ENCODE measurements at regions of chr9 and their contacts with region 1.

Region 1: DNA sequence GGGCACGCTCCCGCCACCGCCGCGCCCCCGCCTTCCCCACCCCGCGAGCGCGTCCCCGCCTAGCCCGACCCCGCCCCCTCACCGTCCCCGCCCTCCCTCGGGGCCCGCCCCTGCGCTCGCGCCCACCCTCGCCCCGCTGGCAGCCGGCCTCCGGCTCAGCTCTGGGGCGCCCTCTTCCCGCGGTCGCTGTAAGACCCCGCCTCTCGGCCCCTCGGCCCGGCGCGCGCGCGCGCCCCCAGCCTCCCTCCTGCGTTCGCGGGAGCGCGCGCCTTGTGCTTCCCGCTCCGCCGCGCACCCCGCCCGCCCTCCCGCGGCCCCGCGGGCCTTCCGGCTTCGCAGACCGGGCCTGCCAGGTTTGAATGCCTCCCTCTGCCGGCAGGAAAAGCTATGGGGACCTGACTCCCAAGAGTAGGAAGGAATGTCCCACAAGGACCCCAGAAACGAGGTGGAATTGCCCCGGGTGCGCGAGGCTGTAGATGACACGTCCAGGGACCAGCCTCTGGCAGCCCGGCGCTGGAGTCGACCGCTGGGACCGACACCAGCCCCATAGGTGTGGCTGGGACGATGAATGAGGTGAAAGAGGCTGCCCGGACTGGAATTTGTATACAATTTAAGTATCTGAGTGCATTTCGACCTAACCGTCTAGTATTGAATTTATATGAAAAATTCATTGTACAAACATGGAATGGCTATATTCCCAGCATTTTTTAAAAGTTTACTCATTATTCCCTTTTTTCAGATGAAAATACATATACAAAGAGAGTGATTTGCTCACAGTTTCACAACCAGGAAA is 416 bp upstream of the PTBP3 start:
- DNase-seq: peak; percentile 94 to 95
- H3K4me3 ChIP-seq: peak overlapping the region; percentile 94
- H3K4me3 Mint-ChIP-seq: peak overlapping the region; percentile 88
- H3K27ac Mint-ChIP-seq: peak overlapping the region; percentile 95
- H3K4me1 ChIP-seq: peaks cover 39% of the 10 kb centered on the region
- H3K4me1 Mint-ChIP-seq: peaks cover 27% of the 10 kb centered on the region
- H3K27me3 ChIP-seq: no peaks in the 10 kb centered on the region
- H3K27me3 Mint-ChIP-seq: no peaks in the 10 kb centered on the region
- CTCF ChIP-seq: peak; percentile 52 to 66

Region 2: GRCh38 chr9:112119225-112120029 is 214.4 kb before region 1 on chr9:
- CTCF ChIA-PET with region 1: interaction called, 9 read pairs
- POLR2A ChIA-PET with region 1: no interaction called
- intact Hi-C with region 1: loop called (anchors 1 kb)
- DNase-seq: peak; percentile 89 to 91
- H3K4me3 ChIP-seq: no peak overlapping the region
- H3K4me3 Mint-ChIP-seq: peak overlapping the region; percentile 45
- H3K27ac Mint-ChIP-seq: peak overlapping the region; percentile 96
- H3K4me1 ChIP-seq: peaks cover 54% of the 10 kb centered on the region
- H3K4me1 Mint-ChIP-seq: peaks cover 51% of the 10 kb centered on the region
- H3K27me3 ChIP-seq: no peaks in the 10 kb centered on the region
- H3K27me3 Mint-ChIP-seq: no peaks in the 10 kb centered on the region
- CTCF ChIP-seq: no peak

Region 3: GRCh38 chr9:112198646-112199045 is 135.2 kb before region 1 on chr9:
- CTCF ChIA-PET with region 1: no interaction called
- POLR2A ChIA-PET with region 1: interaction called, 10 read pairs
- intact Hi-C with region 1: no loop called
- DNase-seq: no peak
- H3K4me3 ChIP-seq: no peak overlapping the region
- H3K4me3 Mint-ChIP-seq: no peak overlapping the region
- H3K27ac Mint-ChIP-seq: no peak overlapping the region
- H3K4me1 ChIP-seq: peaks cover 10% of the 10 kb centered on the region
- H3K4me1 Mint-ChIP-seq: peaks cover 7% of the 10 kb centered on the region
- H3K27me3 ChIP-seq: no peaks in the 10 kb centered on the region
- H3K27me3 Mint-ChIP-seq: no peaks in the 10 kb centered on the region
- CTCF ChIP-seq: no peak

Region 4: DNA sequence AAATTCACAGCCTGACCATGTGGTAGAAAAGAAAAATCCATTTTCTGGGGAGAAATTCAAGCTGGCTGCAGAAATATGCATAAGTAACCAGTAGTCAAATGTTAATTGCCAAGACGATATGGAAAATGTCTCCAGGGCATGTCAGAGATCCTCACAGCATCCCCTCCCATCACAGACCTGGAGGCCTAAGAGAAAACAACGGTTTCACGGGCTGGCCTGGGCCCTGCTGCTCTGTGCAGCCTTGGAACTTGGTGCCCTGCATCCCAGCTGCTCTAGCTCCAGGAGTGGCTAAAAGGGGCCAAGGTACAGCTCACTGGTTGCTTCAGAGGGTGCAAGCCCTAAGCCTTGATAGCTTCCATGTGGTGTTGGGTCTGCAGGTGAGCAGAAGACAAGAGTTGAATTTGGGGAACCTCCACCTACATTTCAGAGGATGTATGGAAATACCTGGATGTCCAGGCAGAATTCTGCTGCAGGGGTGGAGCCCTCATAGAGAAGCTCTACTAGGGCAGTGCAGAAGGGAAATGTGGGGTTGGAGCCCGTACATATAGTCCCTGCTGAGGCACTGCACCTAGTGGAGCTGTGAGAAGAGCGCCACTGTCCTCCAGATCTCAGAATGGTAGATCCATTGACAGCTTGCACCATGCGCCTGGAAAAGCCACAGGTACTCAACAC is 50.1 kb before region 1 on chr9:
- CTCF ChIA-PET with region 1: no interaction called
- POLR2A ChIA-PET with region 1: no interaction called
- intact Hi-C with region 1: no loop called
- DNase-seq: peak in 1 of 2 experiments; percentile 25
- H3K4me3 ChIP-seq: no peak overlapping the region
- H3K4me3 Mint-ChIP-seq: no peak overlapping the region
- H3K27ac Mint-ChIP-seq: no peak overlapping the region
- H3K4me1 ChIP-seq: peaks cover 4% of the 10 kb centered on the region
- H3K4me1 Mint-ChIP-seq: no peaks in the 10 kb centered on the region
- H3K27me3 ChIP-seq: no peaks in the 10 kb centered on the region
- H3K27me3 Mint-ChIP-seq: no peaks in the 10 kb centered on the region
- CTCF ChIP-seq: no peak

Region 5: GRCh38 chr9:112361601-112362000 is 27.8 kb after region 1 on chr9:
- CTCF ChIA-PET with region 1: no interaction called
- POLR2A ChIA-PET with region 1: no interaction called
- intact Hi-C with region 1: loop called (anchors 1 kb)
- DNase-seq: peak in 1 of 2 experiments; percentile 49
- H3K4me3 ChIP-seq: no peak overlapping the region
- H3K4me3 Mint-ChIP-seq: no peak overlapping the region
- H3K27ac Mint-ChIP-seq: no peak overlapping the region
- H3K4me1 ChIP-seq: no peaks in the 10 kb centered on the region
- H3K4me1 Mint-ChIP-seq: no peaks in the 10 kb centered on the region
- H3K27me3 ChIP-seq: no peaks in the 10 kb centered on the region
- H3K27me3 Mint-ChIP-seq: no peaks in the 10 kb centered on the region
- CTCF ChIP-seq: peak; percentile 43 to 70

Region 6: GRCh38 chr9:113221003-113221799 is 887.4 kb after region 1 on chr9 and contains the starts of genes FKBP15 and SLC31A1:
- CTCF ChIA-PET with region 1: no interaction called
- POLR2A ChIA-PET with region 1: no interaction called
- intact Hi-C with region 1: loop called (anchors 10 kb)
- DNase-seq: peak; percentile 98 to 99
- H3K4me3 ChIP-seq: peak within 1 kb of the TSS; percentile 74
- H3K4me3 Mint-ChIP-seq: peak within 1 kb of the TSS; percentile 97
- H3K27ac Mint-ChIP-seq: peak within 1 kb of the TSS; percentile 93
- H3K4me1 ChIP-seq: peaks cover 15% of the 10 kb centered on the region
- H3K4me1 Mint-ChIP-seq: peaks cover 17% of the 10 kb centered on the region
- H3K27me3 ChIP-seq: no peaks in the 10 kb centered on the region
- H3K27me3 Mint-ChIP-seq: no peaks in the 10 kb centered on the region
- CTCF ChIP-seq: no peak
- total RNA-seq, gene FKBP15: 20.1 TPM in 2 replicates
- total RNA-seq, gene SLC31A1: 57.8 and 64.9 TPM in 2 replicates

Measured in Caco-2 (cell line).